Caco-2 (cell line): ENCODE measurements at regions of chr11 and their contacts with region 1.

Region 1: GRCh38 chr11:114556135-114556534 is 3.5 kb downstream of the NXPE1 start:
- DNase-seq: peak in 1 of 2 experiments; percentile 51
- H3K4me3 ChIP-seq: no peak overlapping the region
- H3K4me3 Mint-ChIP-seq: no peak overlapping the region
- H3K27ac Mint-ChIP-seq: peak overlapping the region; percentile 10
- H3K4me1 ChIP-seq: peaks cover 36% of the 10 kb centered on the region
- H3K4me1 Mint-ChIP-seq: peaks cover 37% of the 10 kb centered on the region
- H3K27me3 ChIP-seq: no peaks in the 10 kb centered on the region
- H3K27me3 Mint-ChIP-seq: no peaks in the 10 kb centered on the region
- CTCF ChIP-seq: no peak

Region 2: GRCh38 chr11:114384487-114384886 is 171.6 kb before region 1 on chr11:
- CTCF ChIA-PET with region 1: no interaction called
- POLR2A ChIA-PET with region 1: no interaction called
- intact Hi-C with region 1: no loop called
- DNase-seq: no peak
- H3K4me3 ChIP-seq: no peak overlapping the region
- H3K4me3 Mint-ChIP-seq: no peak overlapping the region
- H3K27ac Mint-ChIP-seq: no peak overlapping the region
- H3K4me1 ChIP-seq: no peaks in the 10 kb centered on the region
- H3K4me1 Mint-ChIP-seq: no peaks in the 10 kb centered on the region
- H3K27me3 ChIP-seq: no peaks in the 10 kb centered on the region
- H3K27me3 Mint-ChIP-seq: peaks cover 5% of the 10 kb centered on the region
- CTCF ChIP-seq: no peak

Region 3: GRCh38 chr11:114400217-114400914 is 155.8 kb before region 1 on chr11 and contains the starts of genes C11orf71 and RBM7:
- CTCF ChIA-PET with region 1: no interaction called
- POLR2A ChIA-PET with region 1: no interaction called
- intact Hi-C with region 1: loop called (anchors 5 kb)
- DNase-seq: peak; percentile 100
- H3K4me3 ChIP-seq: peak within 1 kb of the TSS; percentile 51
- H3K4me3 Mint-ChIP-seq: peak within 1 kb of the TSS; percentile 91
- H3K27ac Mint-ChIP-seq: peak within 1 kb of the TSS; percentile 99
- H3K4me1 ChIP-seq: peaks cover 16% of the 10 kb centered on the region
- H3K4me1 Mint-ChIP-seq: peaks cover 36% of the 10 kb centered on the region
- H3K27me3 ChIP-seq: no peaks in the 10 kb centered on the region
- H3K27me3 Mint-ChIP-seq: no peaks in the 10 kb centered on the region
- CTCF ChIP-seq: peak in 1 of 2 experiments; percentile 33
- total RNA-seq, gene C11orf71: 9.5 and 9.8 TPM in 2 replicates
- total RNA-seq, gene RBM7: 57.6 and 62.6 TPM in 2 replicates

Region 4: GRCh38 chr11:114569801-114570200 is 13.7 kb after region 1 on chr11:
- CTCF ChIA-PET with region 1: no interaction called
- POLR2A ChIA-PET with region 1: no interaction called
- intact Hi-C with region 1: loop called (anchors 1 kb)
- DNase-seq: peak; percentile 79 to 80
- H3K4me3 ChIP-seq: no peak overlapping the region
- H3K4me3 Mint-ChIP-seq: peak overlapping the region; percentile 24
- H3K27ac Mint-ChIP-seq: peak overlapping the region; percentile 82
- H3K4me1 ChIP-seq: peaks cover 26% of the 10 kb centered on the region
- H3K4me1 Mint-ChIP-seq: peaks cover 19% of the 10 kb centered on the region
- H3K27me3 ChIP-seq: no peaks in the 10 kb centered on the region; the same call in 1 of the 2 replicates
- H3K27me3 Mint-ChIP-seq: no peaks in the 10 kb centered on the region
- CTCF ChIP-seq: no peak